Activated CD8-positive, alpha-beta T cell treated with anti-CD3 and anti-CD28 coated beads, Interleukin-2, amount 10 ng/mL, durations not matched to agents 7 days and 5 days (primary cell): ENCODE measurements at regions of chr1 and their contacts with region 1.

Region 1: DNA sequence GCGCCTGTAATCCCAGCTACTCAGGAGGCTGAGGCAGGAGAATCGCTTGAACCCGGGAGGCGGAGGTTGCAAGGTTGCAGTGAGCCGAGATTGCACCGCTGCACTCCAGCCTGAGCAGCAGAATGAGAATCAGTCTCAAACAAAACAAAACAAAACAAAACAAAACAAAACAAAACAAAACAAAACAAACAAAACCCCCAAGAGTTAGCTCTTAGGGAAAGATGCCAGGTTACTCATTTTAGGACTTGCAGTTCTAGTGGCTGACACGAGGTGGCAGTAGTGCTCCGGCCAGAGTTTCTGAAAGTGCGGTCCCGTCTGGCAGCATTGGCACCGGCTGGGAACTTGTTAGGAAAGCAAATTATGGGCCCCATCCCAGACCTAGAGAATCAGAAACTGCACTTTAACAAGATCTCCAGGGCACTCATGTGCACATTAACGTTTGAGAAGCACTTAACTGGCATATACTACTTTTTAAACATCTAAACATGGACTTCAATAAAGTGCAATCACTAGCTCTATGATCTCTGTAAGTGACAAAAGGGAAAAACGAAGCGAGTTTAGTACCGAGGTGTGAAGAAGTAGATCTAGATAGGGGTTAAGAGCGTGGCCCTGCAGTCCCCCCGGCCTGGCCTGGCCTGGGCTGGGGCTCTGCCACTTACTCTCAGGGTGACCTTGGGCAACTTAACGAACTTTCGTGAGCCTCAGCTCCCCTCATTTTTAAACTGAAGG is 41.9 kb upstream of the TNFRSF1B start:
- DNase-seq: peak; percentile 86
- ATAC-seq: peak; percentile 50
- H3K4me3 Mint-ChIP-seq: no peak overlapping the region
- H3K27ac Mint-ChIP-seq: peak overlapping the region; percentile 35
- H3K4me1 Mint-ChIP-seq: peaks cover 45% of the 10 kb centered on the region
- H3K27me3 Mint-ChIP-seq: peaks cover 15% of the 10 kb centered on the region

Region 2: GRCh38 chr1:11898831-11899467 is 225.9 kb before region 1 on chr1:
- CTCF ChIA-PET with region 1: no interaction called
- POLR2A ChIA-PET with region 1: no interaction called
- DNase-seq: peak; percentile 45
- ATAC-seq: peak; percentile 64
- H3K4me3 Mint-ChIP-seq: no peak overlapping the region
- H3K27ac Mint-ChIP-seq: no peak overlapping the region
- H3K4me1 Mint-ChIP-seq: no peaks in the 10 kb centered on the region
- H3K27me3 Mint-ChIP-seq: peaks cover 37% of the 10 kb centered on the region

Region 3: GRCh38 chr1:12032161-12032621 is 92.7 kb before region 1 on chr1:
- CTCF ChIA-PET with region 1: no interaction called
- POLR2A ChIA-PET with region 1: no interaction called
- DNase-seq: no peak
- ATAC-seq: no peak
- H3K4me3 Mint-ChIP-seq: no peak overlapping the region
- H3K27ac Mint-ChIP-seq: no peak overlapping the region
- H3K4me1 Mint-ChIP-seq: no peaks in the 10 kb centered on the region
- H3K27me3 Mint-ChIP-seq: no peaks in the 10 kb centered on the region

Region 4: GRCh38 chr1:12135612-12136011 is 10.8 kb after region 1 on chr1:
- CTCF ChIA-PET with region 1: interaction called, 23 read pairs
- POLR2A ChIA-PET with region 1: interaction called, 3 read pairs
- DNase-seq: no peak
- ATAC-seq: no peak
- H3K4me3 Mint-ChIP-seq: no peak overlapping the region
- H3K27ac Mint-ChIP-seq: no peak overlapping the region
- H3K4me1 Mint-ChIP-seq: peaks cover 28% of the 10 kb centered on the region
- H3K27me3 Mint-ChIP-seq: no peaks in the 10 kb centered on the region

Region 5: DNA sequence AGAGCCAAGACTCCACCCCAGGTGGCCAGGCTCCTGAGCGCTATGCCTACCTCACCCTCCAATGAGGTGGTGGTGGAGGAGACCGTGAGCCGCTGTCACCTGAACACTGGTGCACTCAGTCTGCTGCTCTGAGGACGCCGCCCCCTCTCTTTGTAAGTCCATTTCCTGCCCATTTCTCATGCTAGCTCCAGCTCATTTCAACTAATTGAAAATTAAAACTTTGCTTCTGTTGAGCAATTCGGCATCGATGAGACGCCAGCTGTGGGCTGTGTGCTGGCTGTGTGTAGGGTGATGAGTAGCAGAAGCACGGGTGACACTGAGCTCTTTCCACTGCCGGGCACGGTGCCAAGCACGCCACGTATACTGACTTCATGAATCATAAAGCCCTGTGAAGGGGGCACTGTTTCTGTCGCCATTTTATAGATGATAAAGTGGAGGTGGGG is 53.2 kb after region 1 on chr1:
- CTCF ChIA-PET with region 1: interaction called, 118 read pairs
- POLR2A ChIA-PET with region 1: interaction called, 3 read pairs
- DNase-seq: peak; percentile 86
- ATAC-seq: peak; percentile 61
- H3K4me3 Mint-ChIP-seq: peak overlapping the region; percentile 75
- H3K27ac Mint-ChIP-seq: peak overlapping the region; percentile 100
- H3K4me1 Mint-ChIP-seq: peaks cover 97% of the 10 kb centered on the region
- H3K27me3 Mint-ChIP-seq: no peaks in the 10 kb centered on the region

Region 6: DNA sequence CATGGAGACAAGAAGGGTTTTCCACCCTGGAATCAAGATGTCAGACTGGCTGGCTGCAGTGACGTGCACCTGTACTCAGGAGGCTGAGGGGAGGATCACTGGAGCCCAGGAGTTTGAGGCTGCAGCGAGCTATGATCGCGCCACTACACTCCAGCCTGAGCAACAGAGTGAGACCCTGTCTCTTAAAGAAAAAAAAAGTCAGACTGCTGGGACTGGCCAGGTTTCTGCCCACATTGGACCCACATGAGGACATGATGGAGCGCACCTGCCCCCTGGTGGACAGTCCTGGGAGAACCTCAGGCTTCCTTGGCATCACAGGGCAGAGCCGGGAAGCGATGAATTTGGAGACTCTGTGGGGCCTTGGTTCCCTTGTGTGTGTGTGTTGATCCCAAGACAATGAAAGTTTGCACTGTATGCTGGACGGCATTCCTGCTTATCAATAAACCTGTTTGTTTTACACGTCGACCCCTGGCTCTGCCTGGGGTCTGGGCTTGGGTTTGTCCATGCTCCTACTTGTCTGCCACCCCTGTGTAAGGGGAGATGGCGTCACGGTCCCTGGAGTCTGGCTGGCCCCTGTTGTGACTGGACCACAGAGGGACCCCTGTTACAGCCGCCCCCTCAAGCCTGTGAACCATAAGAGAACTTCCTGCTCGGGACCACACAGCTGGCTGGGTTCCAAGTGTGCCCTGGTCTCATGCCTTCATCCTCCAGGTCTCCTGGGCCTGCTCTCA is 84.1 kb after region 1 on chr1:
- CTCF ChIA-PET with region 1: interaction called, 369 read pairs
- POLR2A ChIA-PET with region 1: interaction called, 8 read pairs
- DNase-seq: peak; percentile 88
- ATAC-seq: peak; percentile 76
- H3K4me3 Mint-ChIP-seq: no peak overlapping the region
- H3K27ac Mint-ChIP-seq: peak overlapping the region; percentile 78
- H3K4me1 Mint-ChIP-seq: peaks cover 63% of the 10 kb centered on the region
- H3K27me3 Mint-ChIP-seq: peaks cover 2% of the 10 kb centered on the region

Region 7: GRCh38 chr1:12244078-12244477 is 119.2 kb after region 1 on chr1:
- CTCF ChIA-PET with region 1: interaction called, 60 read pairs
- POLR2A ChIA-PET with region 1: no interaction called
- DNase-seq: peak; percentile 27
- ATAC-seq: no peak
- H3K4me3 Mint-ChIP-seq: no peak overlapping the region
- H3K27ac Mint-ChIP-seq: no peak overlapping the region
- H3K4me1 Mint-ChIP-seq: no peaks in the 10 kb centered on the region
- H3K27me3 Mint-ChIP-seq: no peaks in the 10 kb centered on the region

Region 8: DNA sequence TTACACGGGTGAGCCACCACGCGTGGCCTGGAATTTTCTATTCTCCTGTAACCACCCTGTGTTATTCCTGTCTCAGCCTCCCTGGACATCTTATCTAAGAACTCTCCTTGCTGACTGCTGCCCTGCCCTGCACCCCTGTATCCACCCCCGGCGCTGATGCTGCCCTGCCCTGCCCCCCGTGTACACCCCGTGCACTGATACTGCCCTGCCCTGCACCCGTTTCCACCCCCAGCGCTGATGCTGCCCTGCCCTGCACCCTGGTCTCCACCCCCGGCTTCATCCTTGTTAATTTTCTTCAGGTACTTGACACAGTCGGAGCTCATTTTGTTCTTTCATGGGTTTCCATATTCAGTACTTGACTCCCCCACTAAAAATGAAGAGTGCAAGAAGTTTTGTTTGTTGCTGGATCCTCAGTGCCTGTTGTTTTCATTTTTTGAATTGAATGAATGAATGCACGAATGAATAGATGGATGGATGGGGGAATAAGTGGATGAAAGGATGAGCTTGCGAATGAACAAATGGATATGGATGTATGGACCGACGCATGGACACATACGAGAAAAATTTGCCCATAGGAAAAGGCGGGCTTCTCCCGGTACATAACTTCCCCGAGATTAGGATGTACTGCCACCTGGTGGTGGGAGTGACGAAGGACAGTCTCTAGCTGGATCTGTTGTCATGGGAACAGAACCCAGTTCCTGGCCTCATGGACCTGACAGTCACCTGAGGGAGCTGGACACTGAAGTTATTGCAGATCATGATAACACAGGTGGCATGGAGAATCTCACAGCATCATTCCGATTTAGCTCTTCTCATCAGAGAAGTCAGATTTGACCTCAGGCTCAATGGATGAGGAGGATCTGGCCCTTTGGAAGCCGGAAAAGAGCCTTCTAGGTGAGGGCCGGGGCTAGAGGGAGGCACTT is 533.9 kb after region 1 on chr1:
- CTCF ChIA-PET with region 1: interaction called, 14 read pairs
- POLR2A ChIA-PET with region 1: no interaction called
- DNase-seq: peak; percentile 78
- ATAC-seq: peak; percentile 81
- H3K4me3 Mint-ChIP-seq: peak overlapping the region; percentile 47
- H3K27ac Mint-ChIP-seq: peak overlapping the region; percentile 0
- H3K4me1 Mint-ChIP-seq: peaks cover 12% of the 10 kb centered on the region
- H3K27me3 Mint-ChIP-seq: peaks cover 10% of the 10 kb centered on the region